HepG2 (cell line): ENCODE measurements at regions of chr6 and their contacts with region 1.

Region 1: GRCh38 chr6:12289933-12290820 is at the start of gene EDN1:
- DNase-seq: peak; percentile 57
- ATAC-seq: peak; percentile 95
- H3K4me3 ChIP-seq: peak within 1 kb of the TSS; percentile 41 to 58 (median 56)
- H3K27ac ChIP-seq: no peak within 1 kb of the TSS
- H3K4me1 ChIP-seq: peaks cover 29% of the 10 kb centered on the region
- H3K27me3 ChIP-seq: peaks cover 0 to 37% of the 10 kb centered on the region in 2 experiments; a peak in 3 of 5 replicates
- CTCF ChIP-seq: peak; percentile 76
- EP300 ChIP-seq: no peak
- POLR2A ChIP-seq: no peak
- RAD21 ChIP-seq: 0 out of 2 replicates have a peak, but pooled peaks have one; percentile 34
- total RNA-seq, gene EDN1: 0.15 and 0.21 TPM in 2 replicates

Region 2: GRCh38 chr6:11653028-11653583 is 637.1 kb before region 1 on chr6:
- CTCF ChIA-PET with region 1: interaction called, 23 read pairs
- POLR2A ChIA-PET with region 1: no interaction called
- in situ Hi-C with region 1: loop called (anchors 5 kb)
- intact Hi-C with region 1: loop called (anchors 1 kb)
- DNase-seq: peak; percentile 15
- ATAC-seq: no peak; the same call in 2 of the 3 replicates
- H3K4me3 ChIP-seq: no peak overlapping the region
- H3K27ac ChIP-seq: no peak overlapping the region
- H3K4me1 ChIP-seq: no peaks in the 10 kb centered on the region
- H3K27me3 ChIP-seq: peaks cover 0 to 22% of the 10 kb centered on the region in 2 experiments; a peak in 2 of 5 replicates
- CTCF ChIP-seq: no peak
- EP300 ChIP-seq: no peak
- POLR2A ChIP-seq: no peak
- RAD21 ChIP-seq: no peak

Region 3: GRCh38 chr6:12150812-12151432 is 139.3 kb before region 1 on chr6:
- CTCF ChIA-PET with region 1: interaction called, 12 read pairs
- POLR2A ChIA-PET with region 1: no interaction called
- in situ Hi-C with region 1: no loop called
- intact Hi-C with region 1: loop called (anchors 1 kb)
- DNase-seq: peak; percentile 38
- ATAC-seq: peak; percentile 90
- H3K4me3 ChIP-seq: no peak overlapping the region
- H3K27ac ChIP-seq: no peak overlapping the region
- H3K4me1 ChIP-seq: no peaks in the 10 kb centered on the region
- H3K27me3 ChIP-seq: no peaks in the 10 kb centered on the region
- CTCF ChIP-seq: peak; percentile 81
- EP300 ChIP-seq: no peak
- POLR2A ChIP-seq: no peak
- RAD21 ChIP-seq: peak; percentile 70

Region 4: DNA sequence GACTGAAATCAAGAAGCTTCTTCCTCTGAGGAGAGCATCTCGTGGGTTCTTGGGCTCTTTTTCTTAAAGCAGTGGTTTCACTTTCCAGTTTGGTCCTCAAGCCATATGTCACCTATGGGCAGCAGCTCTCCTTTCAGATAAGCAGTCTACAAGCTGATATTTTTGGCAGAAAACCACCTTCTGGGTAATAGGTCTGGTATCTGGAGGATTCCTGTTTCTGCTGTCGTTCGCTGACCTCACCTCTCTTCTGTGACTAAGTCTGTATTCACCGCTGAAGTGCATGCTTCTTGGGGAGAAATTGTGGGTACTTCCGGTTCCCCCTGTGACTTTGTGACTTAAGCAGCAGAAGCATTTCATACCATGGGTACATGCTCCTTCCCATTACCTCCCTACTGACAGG is 193.5 kb after region 1 on chr6:
- CTCF ChIA-PET with region 1: no interaction called
- POLR2A ChIA-PET with region 1: no interaction called
- in situ Hi-C with region 1: no loop called
- intact Hi-C with region 1: loop called (anchors 5 kb)
- DNase-seq: no peak
- ATAC-seq: no peak
- H3K4me3 ChIP-seq: no peak overlapping the region
- H3K27ac ChIP-seq: no peak overlapping the region
- H3K4me1 ChIP-seq: peaks cover 17% of the 10 kb centered on the region
- H3K27me3 ChIP-seq: 0 out of 5 replicates have a peak, but pooled peaks cover 0 to 4% of the 10 kb centered on the region in 2 experiments
- CTCF ChIP-seq: no peak
- EP300 ChIP-seq: no peak
- POLR2A ChIP-seq: no peak
- RAD21 ChIP-seq: no peak

Region 5: GRCh38 chr6:12605888-12606345 is 315.7 kb after region 1 on chr6:
- CTCF ChIA-PET with region 1: interaction called, 35 read pairs
- POLR2A ChIA-PET with region 1: no interaction called
- in situ Hi-C with region 1: loop called (anchors 5 kb)
- intact Hi-C with region 1: loop called (anchors 1 kb)
- DNase-seq: peak; percentile 72
- ATAC-seq: peak; percentile 97
- H3K4me3 ChIP-seq: no peak overlapping the region
- H3K27ac ChIP-seq: no peak overlapping the region
- H3K4me1 ChIP-seq: no peaks in the 10 kb centered on the region
- H3K27me3 ChIP-seq: no peaks in the 10 kb centered on the region
- CTCF ChIP-seq: peak; percentile 93
- EP300 ChIP-seq: no peak
- POLR2A ChIP-seq: no peak
- RAD21 ChIP-seq: peak; percentile 76

Region 6: GRCh38 chr6:14009431-14009830 is 1719.3 kb after region 1 on chr6:
- CTCF ChIA-PET with region 1: no interaction called
- POLR2A ChIA-PET with region 1: no interaction called
- in situ Hi-C with region 1: no loop called
- intact Hi-C with region 1: no loop called
- DNase-seq: no peak
- ATAC-seq: no peak
- H3K4me3 ChIP-seq: no peak overlapping the region
- H3K27ac ChIP-seq: no peak overlapping the region
- H3K4me1 ChIP-seq: no peaks in the 10 kb centered on the region
- H3K27me3 ChIP-seq: peaks cover 0 to 25% of the 10 kb centered on the region in 2 experiments; a peak in 2 of 5 replicates
- CTCF ChIP-seq: no peak
- EP300 ChIP-seq: no peak
- POLR2A ChIP-seq: no peak
- RAD21 ChIP-seq: no peak